ENCODE measurements at regions of chr17 and their contacts with region 1.

Region 1: DNA sequence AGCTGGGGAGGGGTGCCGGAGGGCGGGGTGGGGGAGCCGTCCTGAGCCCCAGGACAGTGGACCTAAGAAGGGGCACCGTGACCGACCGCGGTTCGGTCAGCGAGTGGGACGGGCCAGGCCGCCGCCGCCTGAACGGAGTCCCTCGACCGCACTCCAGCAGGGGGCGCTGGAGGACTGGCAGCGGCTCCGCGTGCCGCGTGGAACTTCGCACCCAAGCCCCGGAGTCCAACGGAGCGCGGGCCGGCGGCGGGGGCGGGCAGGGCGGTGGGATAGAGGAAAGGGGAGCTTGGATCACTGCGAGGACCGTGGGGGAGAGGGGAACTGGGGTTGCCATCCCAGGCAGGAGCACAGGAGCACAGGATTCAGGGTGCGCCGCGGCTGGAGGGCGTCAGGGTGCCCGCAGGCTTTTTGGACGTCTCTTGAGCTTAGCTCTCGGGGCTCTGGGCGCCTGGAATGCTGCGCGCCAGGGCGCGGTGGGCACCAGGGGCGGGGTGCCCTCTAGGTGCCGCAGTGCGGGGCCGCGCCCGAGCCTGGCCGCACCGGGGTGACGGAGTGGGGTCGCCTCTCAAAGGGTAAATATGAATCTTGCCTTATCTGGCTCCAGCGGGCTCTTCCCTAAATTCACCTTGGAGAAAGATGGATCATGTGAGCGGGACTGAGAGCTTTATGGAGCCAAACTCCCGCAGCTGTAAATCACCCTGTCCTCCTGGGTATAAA is 382 bp upstream of the OTOP2 start:
- DNase-seq: peak; percentile 98
- H3K4me3 ChIP-seq: peak overlapping the region; percentile 42 to 62
- H3K27ac ChIP-seq: no peak overlapping the region
- H3K4me1 ChIP-seq: peaks cover 0 to 19% of the 10 kb centered on the region in 2 experiments; a peak in 1 of 4 replicates
- H3K27me3 ChIP-seq: peaks cover 71% of the 10 kb centered on the region
- CTCF ChIP-seq: peak; percentile 86
- EP300 ChIP-seq: no peak
- RAD21 ChIP-seq: peak; percentile 77

Region 2: DNA sequence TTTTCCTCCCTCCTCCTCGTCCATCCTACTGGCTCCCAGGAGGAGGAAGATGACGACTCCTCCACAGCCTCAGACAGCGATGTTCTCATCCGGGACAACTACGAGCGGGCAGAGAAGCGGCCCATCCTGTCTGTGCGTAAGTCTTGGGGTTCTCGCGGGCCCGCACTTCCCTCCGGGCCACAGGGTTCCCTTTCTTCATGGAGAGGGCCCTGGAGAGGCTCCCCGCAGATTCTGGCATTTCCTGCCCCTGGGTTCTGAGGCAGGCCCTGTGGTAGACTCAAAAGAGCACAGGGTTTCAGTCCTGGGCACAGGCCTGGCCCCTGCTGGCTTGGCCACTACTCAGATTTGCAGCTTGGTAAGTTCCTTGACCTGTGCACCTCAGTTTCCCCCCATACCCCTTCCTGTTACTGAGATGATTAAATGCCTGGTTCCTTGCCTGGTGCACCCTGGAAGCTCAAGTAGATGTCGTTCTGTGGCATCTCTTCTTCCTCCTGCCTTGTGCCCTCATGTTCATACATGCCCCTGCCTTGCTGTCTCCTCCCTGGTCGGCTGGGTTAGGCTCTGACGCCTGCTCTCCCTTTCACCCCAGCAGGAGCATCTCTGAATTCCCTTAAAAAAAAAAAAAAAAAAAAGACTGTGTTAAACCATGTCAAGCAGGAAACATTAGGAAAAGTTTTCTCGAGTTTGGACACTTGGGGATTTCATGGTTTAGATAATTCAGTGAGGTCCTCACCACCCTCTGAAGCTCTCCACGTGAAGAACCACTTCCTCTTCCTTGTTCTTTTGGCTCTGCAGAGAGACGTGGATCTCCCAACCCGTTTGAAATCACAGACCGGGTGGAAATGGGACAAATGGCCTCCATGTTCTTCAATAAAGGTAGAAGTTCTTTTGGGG is 133.3 kb before region 1 on chr17:
- CTCF ChIA-PET with region 1: interaction called, 10 read pairs
- POLR2A ChIA-PET with region 1: no interaction called
- DNase-seq: no peak
- H3K4me3 ChIP-seq: no peak overlapping the region
- H3K27ac ChIP-seq: no peak overlapping the region
- H3K4me1 ChIP-seq: no peaks in the 10 kb centered on the region; a peak in 1 of 4 replicates
- H3K27me3 ChIP-seq: no peaks in the 10 kb centered on the region
- CTCF ChIP-seq: no peak
- EP300 ChIP-seq: no peak
- RAD21 ChIP-seq: no peak

Region 3: DNA sequence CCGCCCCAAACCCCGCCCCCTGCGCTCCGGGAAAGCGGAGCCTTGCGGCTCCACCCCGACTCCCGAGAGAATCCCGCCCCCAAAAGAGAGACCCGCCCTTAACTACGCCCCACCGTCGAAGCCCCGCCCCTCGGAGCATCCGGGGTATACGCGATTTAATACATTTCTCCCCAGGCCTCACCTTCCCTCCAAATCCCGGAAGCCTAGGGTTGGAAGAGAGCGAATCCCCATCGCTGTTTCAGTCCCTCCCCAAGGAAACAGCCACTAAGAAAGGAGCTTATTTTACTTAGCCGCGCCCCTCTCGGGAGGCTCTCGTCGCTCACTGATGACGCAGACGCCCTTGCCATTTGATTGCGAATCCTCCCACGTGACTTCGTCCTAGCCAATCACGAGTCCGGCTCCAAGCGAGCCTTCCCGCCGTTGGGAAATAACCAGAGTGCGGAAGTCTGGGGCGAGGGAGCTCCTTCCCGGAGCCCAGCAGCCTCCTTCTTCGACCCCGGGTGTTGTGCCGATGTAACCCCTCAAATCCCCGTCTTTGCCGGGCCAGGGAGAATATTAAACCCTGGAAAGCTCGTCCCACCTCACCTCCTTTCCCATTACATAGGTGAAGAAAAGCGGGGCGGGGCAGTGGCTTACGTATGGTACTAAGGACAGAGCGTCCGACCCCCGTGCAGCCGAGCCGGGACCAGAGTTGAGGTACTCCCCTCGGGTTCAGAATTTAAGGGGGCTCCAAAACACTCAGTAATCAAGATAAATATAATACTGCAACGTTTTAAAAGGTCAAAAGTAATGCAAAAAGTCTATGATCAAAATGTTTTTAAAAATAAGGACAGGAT is 50.4 kb before region 1 on chr17:
- CTCF ChIA-PET with region 1: interaction called, 10 read pairs
- POLR2A ChIA-PET with region 1: interaction called, 3 read pairs
- DNase-seq: peak; percentile 100
- H3K4me3 ChIP-seq: peak overlapping the region; percentile 69 to 88
- H3K27ac ChIP-seq: peak overlapping the region; percentile 60 to 81
- H3K4me1 ChIP-seq: peaks cover 12 to 19% of the 10 kb centered on the region in 2 experiments; a peak in 3 of 4 replicates
- H3K27me3 ChIP-seq: no peaks in the 10 kb centered on the region
- CTCF ChIP-seq: no peak
- EP300 ChIP-seq: no peak
- RAD21 ChIP-seq: no peak

Region 4: GRCh38 chr17:74898376-74898946 is 25.2 kb before region 1 on chr17:
- CTCF ChIA-PET with region 1: interaction called, 18 read pairs
- POLR2A ChIA-PET with region 1: no interaction called
- DNase-seq: no peak
- H3K4me3 ChIP-seq: no peak overlapping the region
- H3K27ac ChIP-seq: no peak overlapping the region
- H3K4me1 ChIP-seq: peaks cover 0 to 2% of the 10 kb centered on the region in 2 experiments; a peak in 1 of 4 replicates
- H3K27me3 ChIP-seq: peaks cover 47% of the 10 kb centered on the region
- CTCF ChIP-seq: no peak
- EP300 ChIP-seq: no peak
- RAD21 ChIP-seq: no peak

Region 5: GRCh38 chr17:74935585-74936469 is 12.1 kb after region 1 on chr17 and contains the start of gene OTOP3:
- CTCF ChIA-PET with region 1: interaction called, 77 read pairs
- POLR2A ChIA-PET with region 1: interaction called, 3 read pairs
- DNase-seq: peak; percentile 81
- H3K4me3 ChIP-seq: no peak within 1 kb of the TSS; a peak in 1 of 4 replicates
- H3K27ac ChIP-seq: no peak within 1 kb of the TSS
- H3K4me1 ChIP-seq: no peaks in the 10 kb centered on the region; a peak in 1 of 4 replicates
- H3K27me3 ChIP-seq: peaks cover 76% of the 10 kb centered on the region
- CTCF ChIP-seq: no peak
- EP300 ChIP-seq: no peak
- RAD21 ChIP-seq: no peak
- polyA plus RNA-seq, gene OTOP3: not detected in 2 replicates

Region 6: DNA sequence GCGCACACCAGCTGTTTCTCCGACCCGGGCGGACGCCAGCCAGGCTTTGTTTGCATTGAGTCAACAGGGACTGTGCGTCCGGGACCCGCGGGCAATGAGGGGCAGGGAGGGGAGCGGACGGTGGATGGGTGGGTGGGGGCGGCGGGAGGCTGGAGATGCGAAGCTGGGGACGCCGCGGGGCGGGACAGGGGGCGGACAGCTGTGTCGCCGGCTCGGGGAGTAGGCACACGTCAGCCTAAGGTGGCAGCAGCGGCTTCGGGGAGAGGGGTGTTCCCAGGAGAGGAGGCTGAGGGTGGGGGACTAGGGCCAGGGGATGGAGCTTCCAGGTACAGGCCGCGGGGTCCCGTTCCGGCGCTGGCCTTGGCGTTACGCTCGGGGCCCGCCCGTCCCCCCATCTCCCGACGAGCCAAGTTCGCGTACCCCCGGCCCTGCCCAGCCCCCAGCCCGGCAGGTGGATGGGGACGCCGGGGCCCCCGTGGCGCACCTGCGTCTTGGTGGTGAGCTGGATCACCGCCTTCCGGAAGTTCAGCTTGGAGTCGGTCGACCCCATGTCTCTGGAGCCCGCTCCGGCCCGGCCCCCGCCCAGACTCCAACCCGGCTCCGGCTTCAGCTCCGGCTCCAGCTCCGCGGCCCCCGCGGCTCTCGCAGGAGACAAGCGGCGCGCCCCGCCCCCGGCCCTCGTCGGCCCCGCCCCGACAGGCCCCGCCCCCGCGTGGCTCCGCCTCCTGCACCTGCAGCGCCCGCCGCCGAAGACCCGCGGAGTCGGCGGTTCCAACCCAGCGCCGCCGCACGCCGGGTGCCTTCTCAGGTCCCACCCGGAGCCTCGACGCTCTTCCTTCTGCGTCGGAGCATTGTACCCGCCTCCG is 48.6 kb after region 1 on chr17 and contains the start of gene HID1:
- CTCF ChIA-PET with region 1: interaction called, 14 read pairs
- POLR2A ChIA-PET with region 1: no interaction called
- DNase-seq: peak; percentile 96
- H3K4me3 ChIP-seq: peak within 1 kb of the TSS; percentile 54 to 70
- H3K27ac ChIP-seq: peak within 1 kb of the TSS in 1 of 2 experiments; percentile 85; a peak in 2 of 4 replicates
- H3K4me1 ChIP-seq: peaks cover 0 to 22% of the 10 kb centered on the region in 2 experiments; a peak in 1 of 4 replicates
- H3K27me3 ChIP-seq: peaks cover 26% of the 10 kb centered on the region
- CTCF ChIP-seq: no peak
- EP300 ChIP-seq: no peak
- RAD21 ChIP-seq: no peak
- polyA plus RNA-seq, gene HID1: 2.5 and 2.9 TPM in 2 replicates

Measured in SK-N-SH (cell line).